BJ (cell line): ENCODE measurements at regions of chr13 and their contacts with region 1.

Region 1: DNA sequence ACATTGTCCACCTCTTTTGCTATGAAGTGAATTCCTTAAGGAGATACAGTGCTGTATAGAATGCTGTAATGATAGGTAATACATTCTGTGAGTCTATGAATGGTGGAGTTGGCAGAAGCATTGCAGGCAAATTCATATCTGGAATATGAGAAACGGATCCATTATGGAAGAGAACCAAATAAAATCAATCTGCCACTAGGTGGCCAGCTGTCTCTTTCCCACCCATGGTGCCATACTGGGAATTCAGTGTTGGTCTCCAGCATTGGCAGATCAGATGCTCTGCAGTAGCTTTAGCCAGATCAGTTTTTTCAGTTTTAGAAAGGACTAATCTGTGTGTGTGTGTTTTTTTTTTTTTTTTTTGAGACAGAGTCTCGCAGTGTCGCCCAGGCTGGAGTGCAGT is 27.6 kb downstream of the DNAJC3 start:
- DNase-seq: no peak
- H3K4me3 ChIP-seq: no peak overlapping the region
- H3K27me3 ChIP-seq: no peaks in the 10 kb centered on the region
- CTCF ChIP-seq: no peak

Region 2: DNA sequence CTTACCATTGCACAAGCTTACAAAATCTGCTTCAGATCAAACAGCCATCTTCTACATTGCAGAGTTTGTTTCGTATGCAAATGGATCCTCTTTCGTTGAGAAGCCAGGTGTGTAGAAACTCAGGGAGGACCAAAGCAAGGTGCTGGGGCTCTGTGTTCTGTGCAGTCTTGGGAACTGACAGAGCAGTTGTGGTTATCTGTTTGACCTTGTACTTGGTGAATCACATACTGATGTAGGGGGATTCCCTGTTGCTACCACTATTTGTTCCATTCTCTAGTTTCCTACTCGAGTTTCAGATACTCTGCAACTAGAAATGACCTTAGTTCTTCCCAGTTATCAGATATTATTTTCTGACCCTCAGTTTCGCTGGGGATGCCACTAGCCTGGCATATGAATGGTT is 247.2 kb before region 1 on chr13:
- CTCF ChIA-PET with region 1: no interaction called
- POLR2A ChIA-PET with region 1: no interaction called
- DNase-seq: no peak
- H3K4me3 ChIP-seq: no peak overlapping the region
- H3K27me3 ChIP-seq: 0 out of 2 replicates have a peak, but pooled peaks cover 1% of the 10 kb centered on the region
- CTCF ChIP-seq: no peak

Region 3: GRCh38 chr13:95676762-95677563 is 27.5 kb before region 1 on chr13 and contains the start of gene DNAJC3:
- CTCF ChIA-PET with region 1: no interaction called
- POLR2A ChIA-PET with region 1: interaction called, 17 read pairs
- DNase-seq: peak; percentile 90
- H3K4me3 ChIP-seq: peak within 1 kb of the TSS; percentile 94
- H3K27me3 ChIP-seq: no peaks in the 10 kb centered on the region
- CTCF ChIP-seq: no peak
- polyA plus RNA-seq, gene DNAJC3: 10.6 and 19.9 TPM in 2 replicates